Caco-2 (cell line): ENCODE measurements at regions of chr2 and their contacts with region 1.

Region 1: GRCh38 chr2:64062829-64063228 is 43.6 kb upstream of the VPS54 start:
- DNase-seq: peak; percentile 62 to 68
- H3K4me3 ChIP-seq: no peak overlapping the region
- H3K4me3 Mint-ChIP-seq: no peak overlapping the region
- H3K27ac Mint-ChIP-seq: peak overlapping the region; percentile 53
- H3K4me1 ChIP-seq: peaks cover 49% of the 10 kb centered on the region
- H3K4me1 Mint-ChIP-seq: peaks cover 30% of the 10 kb centered on the region
- H3K27me3 ChIP-seq: no peaks in the 10 kb centered on the region
- H3K27me3 Mint-ChIP-seq: no peaks in the 10 kb centered on the region
- CTCF ChIP-seq: no peak

Region 2: GRCh38 chr2:63692002-63692606 is 370.7 kb before region 1 on chr2:
- CTCF ChIA-PET with region 1: no interaction called
- POLR2A ChIA-PET with region 1: no interaction called
- intact Hi-C with region 1: no loop called
- DNase-seq: peak in 1 of 2 experiments; percentile 48
- H3K4me3 ChIP-seq: no peak overlapping the region
- H3K4me3 Mint-ChIP-seq: no peak overlapping the region
- H3K27ac Mint-ChIP-seq: no peak overlapping the region
- H3K4me1 ChIP-seq: no peaks in the 10 kb centered on the region
- H3K4me1 Mint-ChIP-seq: peaks cover 10% of the 10 kb centered on the region
- H3K27me3 ChIP-seq: no peaks in the 10 kb centered on the region
- H3K27me3 Mint-ChIP-seq: no peaks in the 10 kb centered on the region
- CTCF ChIP-seq: peak; percentile 51 to 56

Region 3: DNA sequence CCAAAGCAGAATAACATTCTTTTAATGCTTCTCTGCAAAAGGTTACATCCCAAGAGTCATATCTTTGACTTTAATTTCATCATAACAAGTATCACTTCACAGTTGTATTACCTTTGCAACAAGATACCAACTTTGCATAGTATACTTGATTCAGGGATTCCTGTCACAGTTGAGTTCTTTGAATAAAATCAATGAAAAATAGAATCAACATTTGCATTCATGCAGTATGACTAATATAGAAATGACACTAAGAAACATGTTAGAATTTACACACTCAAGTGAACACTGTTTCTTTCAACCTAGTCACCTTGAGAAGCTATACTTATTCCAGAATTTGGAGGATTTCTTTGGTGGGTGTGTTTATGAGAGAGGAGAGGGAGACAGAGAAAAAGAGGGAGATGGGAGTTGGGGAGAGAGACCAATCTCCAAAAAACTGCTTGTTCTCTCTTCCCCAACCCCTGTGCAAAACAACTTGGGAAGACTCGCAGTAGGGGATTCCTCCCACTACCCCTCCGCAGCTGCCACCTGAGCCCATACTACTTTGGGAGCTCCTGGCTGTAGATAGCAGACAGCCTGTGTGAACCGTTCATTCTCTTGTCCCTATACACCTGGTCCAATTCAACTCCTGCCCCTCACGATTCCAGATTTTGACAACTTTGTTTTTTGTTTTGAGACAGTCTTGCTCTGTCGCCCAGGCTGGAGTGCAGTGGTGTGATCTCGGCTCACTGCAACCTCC is 23.7 kb after region 1 on chr2:
- CTCF ChIA-PET with region 1: no interaction called
- POLR2A ChIA-PET with region 1: no interaction called
- intact Hi-C with region 1: loop called (anchors 2 kb)
- DNase-seq: no peak
- H3K4me3 ChIP-seq: no peak overlapping the region
- H3K4me3 Mint-ChIP-seq: no peak overlapping the region
- H3K27ac Mint-ChIP-seq: peak overlapping the region; percentile 40
- H3K4me1 ChIP-seq: peaks cover 27% of the 10 kb centered on the region
- H3K4me1 Mint-ChIP-seq: peaks cover 21% of the 10 kb centered on the region
- H3K27me3 ChIP-seq: no peaks in the 10 kb centered on the region
- H3K27me3 Mint-ChIP-seq: no peaks in the 10 kb centered on the region
- CTCF ChIP-seq: no peak